Psoas muscle (tissue), 8 donors: ENCODE measurements at regions of chr12 and their contacts with region 1.

Region 1: GRCh38 chr12:29710104-29710503 is 73.6 kb downstream of the TMTC1 start:
- DNase-seq: peak; percentile 44 to 72
- ATAC-seq: peak; percentile 57 to 71 (median 62)
- H3K4me3 ChIP-seq: peak overlapping the region; percentile 16
- H3K27ac ChIP-seq: peak overlapping the region; percentile 60
- H3K4me1 ChIP-seq: peaks cover 57% of the 10 kb centered on the region
- H3K27me3 ChIP-seq: no peaks in the 10 kb centered on the region
- CTCF ChIP-seq: no peak

Region 2: DNA sequence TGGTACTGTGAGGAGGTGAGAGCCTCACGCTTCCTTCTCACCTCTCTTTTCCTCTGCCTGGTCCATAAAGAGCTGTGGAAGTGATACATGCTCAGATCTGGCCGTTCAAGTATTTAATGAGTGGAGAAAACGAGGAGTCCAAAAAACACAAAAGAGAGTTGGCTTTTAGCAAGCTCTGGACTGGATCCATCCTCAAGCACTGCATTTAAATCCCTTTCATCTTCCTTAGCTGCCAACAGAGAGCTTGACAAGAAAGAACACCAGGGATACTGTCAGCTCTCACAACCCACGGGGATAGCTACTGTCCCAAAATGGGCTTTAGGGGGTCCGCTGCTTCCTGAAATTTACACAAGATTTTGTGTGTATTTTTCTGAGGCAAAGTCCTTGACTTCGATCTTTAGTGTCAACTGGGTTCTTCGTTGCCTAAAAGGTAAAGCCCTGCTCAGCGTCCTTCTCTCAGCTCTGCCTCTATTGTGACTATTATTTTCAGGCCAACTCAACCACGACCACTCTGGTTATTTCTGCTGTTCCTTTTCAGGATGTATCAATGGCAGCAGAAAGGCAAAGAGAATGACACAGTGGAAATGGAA is 47.3 kb before region 1 on chr12:
- intact Hi-C with region 1: loop called (anchors 5 to 10 kb)
- DNase-seq: no peak
- ATAC-seq: no peak
- H3K4me3 ChIP-seq: no peak overlapping the region
- H3K27ac ChIP-seq: peak overlapping the region; percentile 5
- H3K4me1 ChIP-seq: peaks cover 28% of the 10 kb centered on the region
- H3K27me3 ChIP-seq: no peaks in the 10 kb centered on the region
- CTCF ChIP-seq: no peak

Region 3: DNA sequence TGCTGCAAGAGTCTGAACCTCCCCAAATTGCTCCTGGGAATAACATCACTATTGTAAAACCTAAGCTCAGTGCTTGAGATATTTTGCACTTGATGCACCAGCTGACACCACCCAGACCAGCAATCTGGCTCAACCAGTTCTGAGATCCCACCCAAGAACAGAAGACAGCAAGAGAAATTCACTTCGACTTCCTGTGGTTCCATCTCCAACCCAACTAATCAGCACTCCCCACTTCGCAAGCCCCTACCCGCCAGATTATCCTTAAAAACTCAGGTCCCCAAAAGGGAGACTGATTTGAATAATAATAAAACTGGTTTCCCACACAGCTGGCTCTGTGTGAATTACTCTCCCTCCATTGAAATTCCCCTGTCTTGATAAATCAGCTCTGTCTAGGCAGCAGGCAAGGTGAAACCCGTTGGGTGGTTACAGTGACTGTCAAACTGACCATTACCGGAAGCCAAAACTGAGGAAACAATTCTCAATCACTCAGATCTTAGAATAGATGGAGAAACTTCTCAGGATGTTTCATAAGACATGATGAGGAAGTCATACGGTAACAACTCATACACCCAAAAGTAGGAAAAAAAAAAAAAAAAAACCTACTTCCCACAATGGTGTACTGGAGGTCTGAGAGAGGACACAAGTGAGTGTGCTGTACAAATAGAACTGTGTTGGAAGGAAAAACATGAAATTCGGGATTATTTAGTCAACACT is 18.8 kb before region 1 on chr12:
- intact Hi-C with region 1: loop called in 1 of 2 experiments (anchors 1 kb)
- DNase-seq: no peak
- ATAC-seq: no peak
- H3K4me3 ChIP-seq: no peak overlapping the region
- H3K27ac ChIP-seq: no peak overlapping the region
- H3K4me1 ChIP-seq: no peaks in the 10 kb centered on the region
- H3K27me3 ChIP-seq: no peaks in the 10 kb centered on the region
- CTCF ChIP-seq: no peak